T-cell (primary cell): ENCODE measurements at regions of chr9 and their contacts with region 1.

Region 1: DNA sequence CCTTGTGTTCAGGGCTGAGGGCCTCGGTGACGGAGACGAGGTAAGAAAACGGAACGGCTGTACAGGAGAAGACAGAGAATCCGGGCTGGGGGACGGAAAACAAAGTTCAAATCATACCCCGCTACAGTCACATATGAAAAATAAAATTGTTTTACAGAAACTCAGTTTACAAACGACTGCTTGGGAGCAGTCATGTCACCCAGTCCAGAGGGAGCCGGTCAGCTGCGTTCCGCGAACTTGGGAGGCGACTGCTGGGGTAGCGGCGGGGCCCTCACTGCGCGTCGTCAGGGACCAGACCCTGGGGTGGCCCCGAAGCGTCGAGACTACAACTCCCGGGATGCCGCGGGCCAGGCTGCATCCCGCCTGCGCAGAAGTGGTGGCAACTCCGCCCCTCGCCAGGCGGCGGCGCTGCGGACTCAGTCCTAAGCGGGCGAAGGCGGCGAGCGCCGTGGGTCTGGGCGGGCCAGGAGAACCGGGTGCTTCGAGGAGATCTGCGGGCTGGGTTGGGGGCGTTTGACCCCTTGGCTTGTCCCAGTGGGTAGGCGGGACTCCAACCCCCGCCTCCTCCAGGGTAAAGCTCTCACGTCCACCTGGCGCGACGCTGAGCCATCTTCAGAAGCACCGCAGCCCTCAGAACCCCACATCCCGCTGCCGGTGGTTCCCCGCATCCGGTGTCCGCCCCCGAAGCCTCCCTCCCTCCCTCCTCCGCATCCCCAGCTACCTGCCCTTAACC is 4.0 kb downstream of the SIT1 start:
- DNase-seq: peak; percentile 74 to 95 (median 87)
- ATAC-seq: peak; percentile 83 to 87 (median 85)
- H3K4me3 ChIP-seq: peak overlapping the region; percentile 81 to 84
- H3K4me3 Mint-ChIP-seq: peak overlapping the region; percentile 85 to 97 (median 95)
- H3K27ac ChIP-seq: peak overlapping the region; percentile 92
- H3K27ac Mint-ChIP-seq: peak overlapping the region; percentile 99
- H3K4me1 ChIP-seq: peaks cover 31 to 78% of the 10 kb centered on the region in 2 experiments
- H3K4me1 Mint-ChIP-seq: peaks cover 54 to 74% (median 59%) of the 10 kb centered on the region in 3 donors
- H3K27me3 ChIP-seq: no peaks in the 10 kb centered on the region
- H3K27me3 Mint-ChIP-seq: no peaks in the 10 kb centered on the region

Region 2: DNA sequence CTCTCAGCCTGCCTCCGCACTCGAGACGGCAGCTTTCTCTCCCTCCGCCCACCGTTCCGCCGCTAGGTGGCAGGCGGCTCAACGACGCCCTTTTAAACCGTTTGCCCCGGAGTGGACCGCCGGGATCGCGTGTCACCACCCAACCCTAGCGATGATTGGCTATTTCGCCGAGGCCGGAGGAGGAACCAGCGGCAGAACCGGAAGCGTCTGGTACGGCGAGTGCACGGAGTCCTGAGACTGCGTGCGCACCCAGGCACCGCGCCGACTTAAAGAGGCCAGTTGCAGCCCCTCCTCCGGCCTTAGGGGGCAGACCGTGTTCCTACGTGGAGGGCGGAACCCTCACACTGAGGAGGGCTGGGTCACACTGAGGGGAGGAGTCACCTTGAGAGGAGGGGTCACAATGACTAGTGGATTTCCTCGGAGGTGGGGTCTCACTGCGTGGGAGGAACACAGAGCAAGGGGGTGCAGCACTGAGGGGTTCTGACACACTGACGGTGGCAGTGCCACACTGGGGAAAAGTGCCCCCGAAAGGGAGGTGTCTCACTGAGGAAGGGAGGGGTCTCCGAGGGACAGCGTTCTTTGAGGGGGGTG is 42.6 kb before region 1 on chr9:
- CTCF ChIA-PET with region 1: interaction called in 1 of 2 experiments, 15 read pairs
- POLR2A ChIA-PET with region 1: no interaction called
- DNase-seq: peak; percentile 96 to 100 (median 99)
- ATAC-seq: peak; percentile 84 to 90 (median 86)
- H3K4me3 ChIP-seq: peak overlapping the region; percentile 75 to 89
- H3K4me3 Mint-ChIP-seq: peak overlapping the region; percentile 95 to 97 (median 97)
- H3K27ac ChIP-seq: peak overlapping the region; percentile 87
- H3K27ac Mint-ChIP-seq: peak overlapping the region; percentile 98 to 100
- H3K4me1 ChIP-seq: peaks cover 14 to 36% of the 10 kb centered on the region in 2 experiments
- H3K4me1 Mint-ChIP-seq: peaks cover 37 to 39% (median 38%) of the 10 kb centered on the region in 3 donors
- H3K27me3 ChIP-seq: no peaks in the 10 kb centered on the region
- H3K27me3 Mint-ChIP-seq: no peaks in the 10 kb centered on the region

Region 3: DNA sequence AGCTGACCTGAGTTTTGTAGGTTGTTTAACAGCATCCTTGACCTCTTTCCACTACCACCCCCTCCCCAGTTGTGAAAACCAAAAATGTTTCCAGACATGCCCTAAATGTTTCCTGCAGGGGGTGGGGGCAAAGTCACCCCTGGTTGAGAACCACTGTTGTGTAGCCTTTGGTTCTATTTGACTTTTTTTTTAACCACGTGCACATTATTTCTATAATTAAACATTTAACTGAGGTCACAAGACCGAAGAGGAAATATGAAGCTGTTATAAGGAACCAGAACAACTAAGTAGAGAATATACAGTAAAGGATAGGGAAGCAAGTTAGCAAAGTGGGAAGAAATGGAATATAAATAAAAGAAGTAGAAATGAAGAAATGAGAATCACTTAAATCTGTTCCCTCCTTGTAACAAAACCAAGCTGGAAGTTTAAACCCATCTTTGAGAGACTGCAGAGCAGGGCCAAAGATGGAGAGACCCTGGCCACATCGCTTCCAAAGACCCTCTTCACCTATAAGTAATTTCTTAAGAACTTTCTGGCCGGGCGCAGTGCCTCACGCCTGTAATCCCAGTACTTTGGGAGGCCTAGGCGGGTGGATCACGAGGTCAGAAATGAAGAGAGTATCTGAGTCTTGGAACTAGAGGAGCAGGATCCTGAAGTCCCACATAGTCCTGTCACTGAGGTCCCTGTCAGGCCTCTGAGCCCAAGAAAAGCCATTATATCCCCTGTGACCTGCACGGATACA is 10.4 kb before region 1 on chr9:
- CTCF ChIA-PET with region 1: interaction called in 1 of 2 experiments, 3 read pairs
- POLR2A ChIA-PET with region 1: interaction called in 1 of 2 experiments, 11 read pairs
- DNase-seq: no peak
- ATAC-seq: no peak
- H3K4me3 ChIP-seq: no peak overlapping the region
- H3K4me3 Mint-ChIP-seq: no peak overlapping the region
- H3K27ac ChIP-seq: peak overlapping the region; percentile 57
- H3K27ac Mint-ChIP-seq: peak overlapping the region; percentile 41 to 82
- H3K4me1 ChIP-seq: peaks cover 20 to 30% of the 10 kb centered on the region in 2 experiments
- H3K4me1 Mint-ChIP-seq: peaks cover 47 to 65% (median 52%) of the 10 kb centered on the region in 3 donors
- H3K27me3 ChIP-seq: no peaks in the 10 kb centered on the region
- H3K27me3 Mint-ChIP-seq: no peaks in the 10 kb centered on the region